Sigmoid colon (tissue), 7 donors: ENCODE measurements at regions of chr17 and their contacts with region 1.

Region 1: DNA sequence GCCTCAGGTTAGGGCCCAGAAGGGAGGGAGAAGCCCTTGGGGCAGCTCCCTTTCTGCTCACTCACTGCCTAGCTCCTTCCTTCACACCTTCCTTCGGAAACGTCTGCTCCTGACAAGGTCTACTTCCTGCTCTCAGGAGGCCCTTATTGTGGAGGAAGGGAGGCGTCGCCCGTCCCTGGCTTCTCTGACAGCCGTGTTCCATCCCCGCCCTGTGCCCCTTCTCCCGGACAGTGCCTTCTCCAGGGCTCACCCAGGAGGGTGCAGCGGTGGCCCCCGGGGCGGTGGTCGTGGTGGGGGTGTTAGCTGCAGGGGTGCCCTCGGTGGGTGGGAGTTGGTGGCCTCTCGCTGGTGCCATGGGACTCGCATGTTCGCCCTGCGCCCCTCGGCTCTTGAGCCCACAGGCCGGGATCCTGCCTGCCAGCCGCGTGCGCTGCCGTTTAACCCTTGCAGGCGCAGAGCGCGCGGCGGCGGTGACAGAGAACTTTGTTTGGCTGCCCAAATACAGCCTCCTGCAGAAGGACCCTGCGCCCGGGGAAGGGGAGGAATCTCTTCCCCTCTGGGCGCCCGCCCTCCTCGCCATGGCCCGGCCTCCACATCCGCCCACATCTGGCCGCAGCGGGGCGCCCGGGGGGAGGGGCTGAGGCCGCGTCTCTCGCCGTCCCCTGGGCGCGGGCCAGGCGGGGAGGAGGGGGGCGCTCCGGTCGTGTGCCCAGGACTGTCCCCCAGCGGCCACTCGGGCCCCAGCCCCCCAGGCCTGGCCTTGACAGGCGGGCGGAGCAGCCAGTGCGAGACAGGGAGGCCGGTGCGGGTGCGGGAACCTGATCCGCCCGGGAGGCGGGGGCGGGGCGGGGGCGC is 231.9 kb downstream of the SEC14L1 start:
- DNase-seq: peak; percentile 95
- H3K4me3 ChIP-seq: peak overlapping the region; percentile 83 to 99 (median 89)
- H3K27ac ChIP-seq: peak overlapping the region; percentile 95 to 99 (median 99)
- H3K4me1 ChIP-seq: peaks cover 0 to 68% (median 58%) of the 10 kb centered on the region in 4 donors
- H3K27me3 ChIP-seq: no peaks in the 10 kb centered on the region
- CTCF ChIP-seq: no peak
- EP300 ChIP-seq: no peak
- POLR2A ChIP-seq: peak in 1 of 2 donors; percentile 17

Region 2: GRCh38 chr17:77331301-77331864 is 41.3 kb before region 1 on chr17:
- intact Hi-C with region 1: loop called (anchors 5 kb)
- DNase-seq: peak; percentile 96
- H3K4me3 ChIP-seq: peak overlapping the region in 3 of 4 donors; percentile 34 to 38 (median 35)
- H3K27ac ChIP-seq: peak overlapping the region; percentile 73 to 92 (median 80)
- H3K4me1 ChIP-seq: peaks cover 0 to 43% (median 28%) of the 10 kb centered on the region in 4 donors
- H3K27me3 ChIP-seq: no peaks in the 10 kb centered on the region
- CTCF ChIP-seq: peak; percentile 91 to 97 (median 94)
- EP300 ChIP-seq: no peak
- POLR2A ChIP-seq: no peak